Left ventricle myocardium inferior (tissue), 1 donor: ENCODE measurements at regions of chr5 and their contacts with region 1.

Region 1: DNA sequence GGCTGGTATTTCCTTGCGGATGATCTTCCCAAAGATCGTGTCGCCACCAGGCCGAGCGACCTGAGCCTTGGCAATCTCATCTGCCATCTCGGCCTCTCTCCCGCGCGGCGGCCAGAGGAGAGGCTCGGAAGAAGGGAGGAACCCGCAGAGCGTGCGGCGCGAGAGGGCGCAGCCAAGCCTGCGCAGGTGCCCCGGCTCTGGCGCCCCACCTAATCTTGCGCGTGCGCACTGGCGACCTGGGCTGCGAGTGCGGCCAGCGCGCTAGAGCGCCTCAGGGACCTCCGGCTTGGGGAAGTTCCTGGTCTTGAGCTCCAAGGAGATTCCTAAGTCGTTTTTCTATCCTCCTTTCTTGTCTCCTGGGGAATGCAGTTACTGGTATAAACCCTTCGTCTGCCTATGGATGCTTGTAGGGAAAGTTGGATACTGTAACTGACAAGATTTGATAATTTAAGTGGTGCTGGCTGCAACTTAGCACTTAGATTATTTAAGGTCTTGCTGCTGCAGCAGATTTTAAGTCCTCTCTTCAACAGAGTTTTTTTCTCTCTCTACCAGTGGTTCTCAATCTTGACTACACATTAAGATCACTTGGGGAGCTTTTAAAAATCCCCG is at the start of gene HINT1:
- DNase-seq: peak; percentile 92
- H3K4me3 ChIP-seq: peak within 1 kb of the TSS; percentile 89
- H3K27ac ChIP-seq: peak within 1 kb of the TSS; percentile 93
- H3K4me1 ChIP-seq: peaks cover 39% of the 10 kb centered on the region
- H3K27me3 ChIP-seq: no peaks in the 10 kb centered on the region
- CTCF ChIP-seq: no peak
- total RNA-seq, gene HINT1: 155 TPM

Region 2: DNA sequence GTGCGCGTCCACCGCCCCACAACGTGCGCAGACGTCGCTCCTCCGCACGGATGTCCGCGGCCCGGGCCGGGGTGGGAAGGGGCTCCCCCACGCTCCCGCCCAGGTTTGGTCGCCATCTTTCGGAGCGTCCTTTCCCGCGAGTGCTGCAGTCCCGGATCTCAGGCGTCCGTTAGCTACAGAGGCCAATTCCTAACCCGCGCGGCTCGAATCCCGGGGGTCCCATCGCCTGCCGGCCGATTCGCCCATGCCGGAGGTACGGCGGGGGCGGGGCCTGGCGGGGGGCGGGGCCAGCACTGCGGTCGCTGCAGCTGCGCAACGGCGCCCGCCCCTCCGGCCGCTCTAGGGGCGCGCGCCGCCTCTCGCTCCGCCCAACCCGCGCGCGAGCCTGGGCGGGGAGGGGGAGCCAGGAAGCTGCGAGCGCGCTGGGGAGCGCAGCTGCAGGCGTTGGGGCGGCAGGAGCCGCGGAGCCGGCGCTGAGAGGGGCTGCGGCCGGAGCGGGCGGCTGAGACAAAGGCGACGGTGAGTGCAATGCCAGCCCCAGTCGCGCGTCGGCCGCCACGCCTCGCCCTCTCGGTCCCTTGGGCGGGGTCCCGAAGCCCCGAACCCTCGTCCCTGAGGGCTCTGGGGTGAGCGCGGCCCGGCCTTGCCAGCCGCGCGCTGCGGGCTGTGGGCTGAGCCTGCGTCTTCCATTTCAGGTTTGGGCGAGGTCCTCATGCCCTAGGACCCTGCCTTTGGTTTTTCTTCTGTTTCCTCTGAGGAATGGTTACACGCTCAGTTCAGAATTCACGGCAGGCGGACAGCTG is 98.6 kb after region 1 on chr5 and contains the start of gene CDC42SE2:
- intact Hi-C with region 1: loop called (anchors 5 kb)
- DNase-seq: peak; percentile 89
- H3K4me3 ChIP-seq: peak within 1 kb of the TSS; percentile 98
- H3K27ac ChIP-seq: peak within 1 kb of the TSS; percentile 90
- H3K4me1 ChIP-seq: peaks cover 42% of the 10 kb centered on the region
- H3K27me3 ChIP-seq: no peaks in the 10 kb centered on the region
- CTCF ChIP-seq: no peak
- total RNA-seq, gene CDC42SE2: 10.3 TPM

Region 3: GRCh38 chr5:131735393-131735792 is 570.2 kb after region 1 on chr5:
- intact Hi-C with region 1: no loop called
- DNase-seq: no peak
- H3K4me3 ChIP-seq: no peak overlapping the region
- H3K27ac ChIP-seq: no peak overlapping the region
- H3K4me1 ChIP-seq: peaks cover 4% of the 10 kb centered on the region
- H3K27me3 ChIP-seq: no peaks in the 10 kb centered on the region
- CTCF ChIP-seq: no peak